Heart right ventricle (tissue), 16 donors: ENCODE measurements at regions of chr5 and their contacts with region 1.

Region 1: DNA sequence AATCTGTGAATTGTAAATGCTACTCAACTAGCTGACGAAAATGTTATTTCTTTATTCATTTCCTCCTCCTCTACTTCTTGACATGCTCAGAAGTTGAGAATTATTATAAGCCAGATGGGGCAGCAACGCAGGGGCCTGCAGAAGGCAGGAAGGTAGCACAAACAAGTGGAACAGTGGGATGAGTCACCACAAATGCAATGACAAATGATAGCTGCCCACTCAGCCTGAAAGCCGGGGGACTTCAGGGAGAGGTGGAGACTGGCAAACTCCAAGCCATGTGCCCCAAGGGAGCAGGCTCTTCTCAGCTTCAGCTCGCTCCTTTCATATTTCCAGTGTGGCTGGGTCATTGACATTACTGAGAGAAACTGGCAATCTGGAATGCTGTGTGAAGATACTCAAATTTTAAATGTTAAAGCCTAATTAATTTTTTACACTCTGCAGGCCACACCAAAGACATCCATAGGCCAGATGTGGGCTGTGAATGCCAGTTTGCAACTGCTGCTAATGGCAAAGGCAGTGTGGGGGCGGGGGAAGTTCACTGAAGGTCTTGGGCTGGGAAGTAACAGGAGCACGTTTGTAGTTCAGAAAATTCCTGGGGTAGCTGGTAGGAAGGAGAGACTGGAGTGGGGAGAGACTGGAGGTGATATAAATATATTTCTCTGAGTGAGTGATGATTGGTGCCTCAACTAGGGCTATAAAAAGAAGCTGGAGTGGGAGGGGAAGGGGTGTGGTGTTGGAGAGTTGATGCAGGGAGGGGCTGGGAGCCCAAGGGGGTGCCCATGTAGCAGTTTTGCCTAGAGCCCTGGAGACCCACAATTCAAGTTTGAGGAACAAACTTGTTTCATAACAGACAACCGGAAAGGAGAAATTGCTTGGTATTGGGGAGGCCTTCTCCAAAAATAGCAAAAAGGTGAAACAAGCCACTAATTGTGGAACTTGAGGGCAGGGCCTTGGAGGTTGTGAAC is 20.8 kb upstream of the ADRB2 start:
- DNase-seq: peak; percentile 51
- ATAC-seq: peak; percentile 89 to 98 (median 93)
- H3K4me3 ChIP-seq: no peak overlapping the region
- H3K27ac ChIP-seq: peak overlapping the region in 9 of 10 donors; percentile 35 to 79 (median 74)
- H3K4me1 ChIP-seq: peaks cover 4 to 64% (median 26%) of the 10 kb centered on the region in 9 donors
- H3K27me3 ChIP-seq: no peaks in the 10 kb centered on the region
- CTCF ChIP-seq: no peak

Region 2: GRCh38 chr5:148963664-148964063 is 158.1 kb after region 1 on chr5:
- intact Hi-C with region 1: loop called in 1 of 10 experiments (anchors 5 kb)
- DNase-seq: no peak
- ATAC-seq: no peak
- H3K4me3 ChIP-seq: no peak overlapping the region
- H3K27ac ChIP-seq: peak overlapping the region in 1 of 10 donors; percentile 82
- H3K4me1 ChIP-seq: peaks cover 3 to 41% (median 7%) of the 10 kb centered on the region in 9 donors
- H3K27me3 ChIP-seq: no peaks in the 10 kb centered on the region
- CTCF ChIP-seq: no peak